ENCODE measurements at regions of chr3 and their contacts with region 1.

Region 1: DNA sequence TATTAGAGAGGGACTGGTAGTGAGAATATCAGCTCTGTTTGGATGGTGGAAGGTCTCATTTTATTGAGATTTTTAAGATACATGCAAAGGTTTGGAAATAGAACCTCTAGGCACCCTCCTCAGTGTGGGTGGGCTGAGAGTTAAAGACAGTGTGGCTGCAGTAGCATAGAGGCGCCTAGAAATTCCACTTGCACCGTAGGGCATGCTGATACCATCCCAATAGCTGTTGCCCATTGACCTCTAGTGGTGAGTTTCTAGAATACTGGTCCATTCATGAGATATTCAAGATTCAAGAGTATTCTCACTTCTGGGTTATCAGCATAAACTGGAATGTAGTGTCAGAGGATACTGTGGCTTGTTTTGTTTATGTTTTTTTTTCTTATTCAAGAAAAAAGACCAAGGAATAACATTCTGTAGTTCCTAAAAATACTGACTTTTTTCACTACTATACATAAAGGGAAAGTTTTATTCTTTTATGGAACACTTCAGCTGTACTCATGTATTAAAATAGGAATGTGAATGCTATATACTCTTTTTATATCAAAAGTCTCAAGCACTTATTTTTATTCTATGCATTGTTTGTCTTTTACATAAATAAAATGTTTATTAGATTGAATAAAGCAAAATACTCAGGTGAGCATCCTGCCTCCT is 87.2 kb downstream of the TGFBR2 start:
- DNase-seq: no peak
- H3K4me3 ChIP-seq: no peak overlapping the region
- H3K27ac ChIP-seq: peak overlapping the region in 1 of 2 donors; percentile 31
- H3K4me1 ChIP-seq: peaks cover 9 to 35% of the 10 kb centered on the region in 2 donors
- H3K27me3 ChIP-seq: no peaks in the 10 kb centered on the region
- CTCF ChIP-seq: peak; percentile 80 to 82 (median 81)

Region 2: DNA sequence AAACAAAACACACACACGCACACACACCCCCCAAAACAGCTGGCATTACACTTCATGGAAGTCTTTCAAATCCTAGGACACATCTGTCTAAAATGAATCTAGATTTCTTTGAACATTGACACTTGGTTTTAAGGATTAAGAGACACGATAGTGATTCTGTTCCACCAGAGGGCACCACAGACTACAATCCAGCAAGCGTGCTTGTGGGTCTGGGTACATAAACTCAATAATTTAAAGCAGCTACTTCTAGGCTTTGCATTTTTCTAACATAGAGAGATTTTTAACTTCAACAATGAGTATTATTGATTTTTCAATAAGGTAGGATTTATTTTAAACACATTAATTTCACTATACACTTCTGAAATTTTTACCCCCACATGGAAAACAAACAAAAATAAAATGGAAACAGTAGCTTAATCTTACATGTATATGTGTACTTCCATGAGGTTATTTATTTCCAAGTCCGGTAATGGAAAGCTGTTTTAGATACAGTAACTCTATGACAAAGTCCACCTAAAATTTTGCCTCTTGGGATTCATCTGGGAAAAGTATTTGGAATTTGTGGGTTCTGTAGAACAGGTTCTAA is 651.2 kb before region 1 on chr3:
- intact Hi-C with region 1: loop called (anchors 1 kb)
- DNase-seq: peak in 1 of 2 donors; percentile 81
- H3K4me3 ChIP-seq: no peak overlapping the region
- H3K27ac ChIP-seq: no peak overlapping the region
- H3K4me1 ChIP-seq: no peaks in the 10 kb centered on the region
- H3K27me3 ChIP-seq: no peaks in the 10 kb centered on the region
- CTCF ChIP-seq: peak; percentile 61 to 78 (median 73)

Region 3: GRCh38 chr3:30112902-30113484 is 580.6 kb before region 1 on chr3:
- intact Hi-C with region 1: loop called (anchors 2 kb)
- DNase-seq: no peak
- H3K4me3 ChIP-seq: no peak overlapping the region
- H3K27ac ChIP-seq: no peak overlapping the region
- H3K4me1 ChIP-seq: peaks cover 0 to 6% of the 10 kb centered on the region in 2 donors
- H3K27me3 ChIP-seq: no peaks in the 10 kb centered on the region
- CTCF ChIP-seq: peak; percentile 58 to 77 (median 63)

Region 4: GRCh38 chr3:30199096-30199759 is 494.4 kb before region 1 on chr3:
- intact Hi-C with region 1: loop called (anchors 5 kb)
- DNase-seq: peak in 1 of 2 donors; percentile 82
- H3K4me3 ChIP-seq: peak overlapping the region in 1 of 2 donors; percentile 15
- H3K27ac ChIP-seq: no peak overlapping the region
- H3K4me1 ChIP-seq: peaks cover 0 to 12% of the 10 kb centered on the region in 2 donors
- H3K27me3 ChIP-seq: no peaks in the 10 kb centered on the region
- CTCF ChIP-seq: peak; percentile 72 to 89 (median 79)

Region 5: GRCh38 chr3:30440147-30440604 is 253.4 kb before region 1 on chr3:
- intact Hi-C with region 1: loop called (anchors 5 kb)
- DNase-seq: no peak
- H3K4me3 ChIP-seq: no peak overlapping the region
- H3K27ac ChIP-seq: peak overlapping the region; percentile 83 to 85
- H3K4me1 ChIP-seq: peaks cover 7 to 75% of the 10 kb centered on the region in 2 donors
- H3K27me3 ChIP-seq: no peaks in the 10 kb centered on the region
- CTCF ChIP-seq: no peak

Region 6: GRCh38 chr3:30518181-30518864 is 175.3 kb before region 1 on chr3:
- intact Hi-C with region 1: loop called (anchors 2 kb)
- DNase-seq: peak in 1 of 2 donors; percentile 89
- H3K4me3 ChIP-seq: no peak overlapping the region
- H3K27ac ChIP-seq: peak overlapping the region; percentile 72
- H3K4me1 ChIP-seq: peaks cover 3 to 33% of the 10 kb centered on the region in 2 donors
- H3K27me3 ChIP-seq: no peaks in the 10 kb centered on the region
- CTCF ChIP-seq: peak in 2 of 3 experiments; percentile 14 to 31